ENCODE measurements at regions of chr1 and their contacts with region 1.

Region 1: GRCh38 chr1:201895913-201896807 is 7.5 kb downstream of the SHISA4 start:
- DNase-seq: peak; percentile 95 to 96
- H3K4me3 ChIP-seq: no peak overlapping the region
- H3K27ac ChIP-seq: peak overlapping the region; percentile 82 to 85
- H3K4me1 ChIP-seq: peaks cover 0 to 12% of the 10 kb centered on the region in 2 donors
- H3K27me3 ChIP-seq: no peaks in the 10 kb centered on the region
- CTCF ChIP-seq: peak; percentile 96 to 99 (median 98)
- POLR2A ChIP-seq: peak; percentile 57

Region 2: GRCh38 chr1:201828820-201829774 is 67.1 kb before region 1 on chr1 and contains the start of gene IPO9:
- intact Hi-C with region 1: no loop called
- DNase-seq: peak; percentile 94 to 95
- H3K4me3 ChIP-seq: peak within 1 kb of the TSS; percentile 98 to 99
- H3K27ac ChIP-seq: peak within 1 kb of the TSS; percentile 93 to 98
- H3K4me1 ChIP-seq: peaks cover 0 to 6% of the 10 kb centered on the region in 2 donors
- H3K27me3 ChIP-seq: no peaks in the 10 kb centered on the region
- CTCF ChIP-seq: peak; percentile 93 to 99 (median 97)
- POLR2A ChIP-seq: peak; percentile 69 to 72
- total RNA-seq, gene IPO9: 8.8 to 48.5 (median 35.2) TPM

Region 3: DNA sequence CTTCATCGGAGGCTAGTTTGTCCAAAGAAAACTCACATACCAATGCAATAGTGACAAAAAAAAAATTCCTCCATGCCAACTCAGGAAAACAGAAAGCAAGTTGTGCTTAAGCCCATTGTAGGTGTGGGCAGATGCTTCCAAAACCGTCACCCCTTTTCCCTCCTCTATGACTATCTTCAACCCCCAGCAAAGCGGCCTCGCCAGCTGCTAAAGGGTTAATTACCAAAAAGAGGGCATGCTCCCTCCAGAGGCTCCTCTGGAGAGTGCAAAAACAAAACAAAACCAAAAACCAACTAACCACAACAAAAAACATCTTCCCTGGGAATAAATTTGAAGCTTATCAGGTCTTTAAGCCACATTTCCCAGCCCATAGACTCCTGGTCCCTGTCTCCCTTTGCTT is 49.0 kb after region 1 on chr1:
- intact Hi-C with region 1: loop called (anchors 2 kb)
- DNase-seq: no peak
- H3K4me3 ChIP-seq: peak overlapping the region; percentile 60 to 63
- H3K27ac ChIP-seq: peak overlapping the region; percentile 94 to 98
- H3K4me1 ChIP-seq: no peaks in the 10 kb centered on the region
- H3K27me3 ChIP-seq: no peaks in the 10 kb centered on the region
- CTCF ChIP-seq: peak in 2 of 4 experiments; percentile 54 to 57
- POLR2A ChIP-seq: no peak

Measured in uterus (tissue), 4 donors.